ENCODE measurements at regions of chr2 and their contacts with region 1.

Region 1: DNA sequence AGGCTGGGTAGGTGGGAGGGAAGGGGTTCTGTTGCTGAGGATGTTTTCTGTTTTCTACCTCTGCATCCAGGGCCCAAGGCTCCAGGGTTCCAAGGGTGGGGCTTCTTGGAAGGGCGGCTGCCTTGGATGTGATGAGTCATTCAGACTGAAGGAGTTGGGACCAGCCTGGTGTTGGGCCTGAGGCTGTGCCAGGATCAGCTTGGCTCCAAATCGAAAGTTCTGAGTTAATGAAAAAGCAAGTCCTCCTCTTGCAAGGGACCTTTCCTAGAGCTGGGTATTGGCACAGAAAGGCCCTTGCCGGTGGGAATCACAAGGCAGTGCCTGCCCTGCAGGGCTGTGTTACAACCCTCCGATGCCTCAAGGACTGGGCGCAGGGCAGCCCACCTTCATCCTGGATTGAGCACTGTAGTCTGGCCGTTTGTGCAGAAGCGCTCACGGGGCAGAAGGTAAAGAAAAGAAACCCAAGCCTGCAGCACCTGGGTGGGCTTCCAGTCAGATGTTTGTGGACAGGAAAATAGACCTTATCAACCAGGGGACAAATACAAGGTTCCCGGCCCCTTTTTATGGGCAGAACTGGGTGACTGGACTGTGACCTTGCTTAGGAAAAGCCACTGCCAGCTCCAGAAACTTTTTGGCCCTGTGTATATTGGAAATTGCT is 52.5 kb upstream of the MCFD2 start:
- DNase-seq: peak; percentile 96
- H3K4me3 Mint-ChIP-seq: peak overlapping the region; percentile 64
- H3K27ac Mint-ChIP-seq: peak overlapping the region; percentile 94
- H3K4me1 Mint-ChIP-seq: peaks cover 54% of the 10 kb centered on the region
- H3K27me3 Mint-ChIP-seq: no peaks in the 10 kb centered on the region
- CTCF ChIP-seq: no peak

Region 2: DNA sequence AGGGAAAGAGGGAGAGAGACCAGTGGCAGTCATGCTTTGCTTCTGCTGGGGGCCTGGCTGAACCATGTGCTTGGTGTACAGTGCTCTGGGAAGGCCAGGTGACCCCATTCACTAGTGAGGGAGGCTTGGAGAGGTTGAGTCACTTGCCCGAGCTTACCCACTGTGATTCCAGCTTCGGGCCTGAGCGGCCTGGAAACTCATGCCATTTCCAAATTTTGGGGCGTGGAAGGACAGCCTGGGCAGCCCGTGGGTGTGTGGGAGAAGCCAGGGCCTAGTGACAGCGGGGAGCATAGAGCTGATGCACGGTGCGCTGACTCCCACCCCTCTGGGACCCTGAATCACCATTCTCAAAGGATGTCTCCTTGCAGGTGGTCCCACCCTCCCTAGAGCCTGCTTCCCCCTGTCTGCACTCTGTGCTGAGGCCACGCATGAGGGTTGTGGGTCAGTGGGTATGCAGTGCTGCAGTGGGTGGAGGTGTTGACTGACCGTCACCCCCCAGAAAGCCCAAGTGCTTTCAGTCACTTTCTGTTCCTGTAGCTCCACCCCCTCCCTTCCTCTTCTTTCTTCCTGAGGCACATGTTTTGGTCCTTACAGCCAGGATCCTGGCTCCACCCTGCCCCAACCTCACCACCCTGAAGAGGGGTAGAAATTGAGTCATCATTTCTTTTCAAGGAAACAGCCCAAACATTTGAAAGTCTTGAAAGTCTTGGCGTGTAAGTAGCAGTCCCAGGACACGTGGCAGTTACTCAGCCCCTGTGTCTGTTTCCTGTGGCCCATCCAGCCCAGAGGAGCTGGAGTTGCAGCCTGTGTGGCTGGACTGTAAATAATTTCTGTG is 16.7 kb after region 1 on chr2:
- CTCF ChIA-PET with region 1: no interaction called
- POLR2A ChIA-PET with region 1: interaction called, 14 read pairs
- intact Hi-C with region 1: loop called (anchors 1 kb)
- DNase-seq: peak; percentile 93
- H3K4me3 Mint-ChIP-seq: peak overlapping the region; percentile 9
- H3K27ac Mint-ChIP-seq: peak overlapping the region; percentile 37
- H3K4me1 Mint-ChIP-seq: peaks cover 26% of the 10 kb centered on the region
- H3K27me3 Mint-ChIP-seq: no peaks in the 10 kb centered on the region
- CTCF ChIP-seq: no peak

Measured in MCF 10A (cell line).